ENCODE measurements at regions of chr16 and their contacts with region 1.

Region 1: DNA sequence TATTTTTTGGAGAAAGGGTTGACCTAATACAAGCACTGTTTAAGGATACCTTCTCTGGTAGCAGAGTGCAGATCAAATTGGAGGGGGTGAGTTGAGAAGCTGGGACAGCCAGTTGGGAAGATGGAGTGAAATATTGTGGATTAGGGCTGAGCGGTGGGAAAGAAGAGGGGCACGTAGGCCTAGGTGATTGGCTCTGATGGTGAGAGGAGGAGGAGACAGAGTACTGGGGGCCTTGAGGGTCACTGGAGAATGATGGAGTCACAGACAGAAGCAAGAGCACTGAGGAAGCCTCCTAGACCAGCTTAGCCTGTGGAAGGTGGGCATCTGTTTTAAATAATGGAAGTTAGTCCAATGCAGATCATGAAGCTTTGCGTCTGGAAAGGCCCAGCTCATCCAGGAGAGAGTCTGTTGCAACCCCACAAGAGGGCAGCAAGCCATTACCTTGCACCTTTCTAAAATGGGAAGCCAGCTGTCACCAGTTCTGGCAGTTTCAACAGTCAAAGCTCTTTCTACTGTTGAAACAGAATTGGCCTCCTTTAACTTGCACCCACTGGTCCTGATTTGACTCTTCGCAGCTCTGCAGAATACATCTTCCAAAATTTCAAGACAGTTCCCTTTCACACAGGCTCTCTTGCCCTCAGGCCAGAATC is 11.8 kb downstream of the SLC9A5 start:
- DNase-seq: no peak
- ATAC-seq: peak; percentile 79
- H3K4me3 ChIP-seq: no peak overlapping the region
- H3K27ac ChIP-seq: no peak overlapping the region
- H3K4me1 ChIP-seq: no peaks in the 10 kb centered on the region
- H3K27me3 ChIP-seq: no peaks in the 10 kb centered on the region
- CTCF ChIP-seq: peak; percentile 62 to 84 (median 70)
- POLR2A ChIP-seq: no peak
- RAD21 ChIP-seq: peak; percentile 92

Region 2: DNA sequence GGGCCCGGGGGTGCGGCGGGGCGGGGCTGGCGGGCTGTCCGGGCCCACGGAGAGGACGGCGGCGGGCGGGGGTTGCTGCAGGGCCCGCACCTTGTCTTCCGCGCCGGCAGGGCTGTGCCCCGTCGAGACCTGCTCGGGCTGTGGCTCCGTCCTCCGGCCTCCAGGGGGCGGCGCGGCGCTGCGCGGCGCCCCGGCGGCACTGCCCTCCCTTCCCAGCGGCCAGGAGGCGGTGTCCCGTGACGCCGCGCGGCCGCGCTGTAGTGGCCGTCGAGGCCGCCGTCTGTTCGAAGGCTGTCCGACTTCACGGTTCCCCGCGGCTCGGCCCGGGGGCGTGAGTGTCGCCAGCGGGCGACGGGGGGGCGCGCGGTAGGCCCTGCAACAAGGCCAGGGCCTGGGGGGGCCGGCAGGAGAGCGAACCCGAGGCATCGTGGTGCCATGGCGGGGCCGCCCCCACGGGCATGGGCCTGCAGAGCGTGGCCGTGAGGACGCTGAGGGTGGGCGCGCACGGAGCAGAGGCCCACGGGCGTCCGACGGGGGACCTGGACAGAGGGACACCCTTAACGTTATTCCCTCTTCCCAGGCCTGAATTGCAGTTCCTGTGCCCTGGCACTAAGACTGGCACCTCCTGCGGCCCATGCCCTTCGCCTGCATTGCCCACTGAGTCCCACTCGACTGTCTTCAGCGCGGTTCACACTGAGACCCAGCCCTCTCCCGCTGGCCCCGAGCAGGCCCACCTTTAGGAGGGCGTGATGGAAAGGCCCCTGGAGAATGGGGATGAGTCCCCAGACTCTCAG is 18.9 kb after region 1 on chr16 and contains the start of gene PLEKHG4:
- CTCF ChIA-PET with region 1: interaction called, 22 read pairs
- POLR2A ChIA-PET with region 1: no interaction called
- RAD21 ChIA-PET with region 1: interaction called in 1 of 2 experiments, 4 read pairs
- intact Hi-C with region 1: no loop called
- DNase-seq: peak; percentile 52
- ATAC-seq: peak; percentile 84
- H3K4me3 ChIP-seq: peak within 1 kb of the TSS; percentile 86 to 87
- H3K27ac ChIP-seq: peak within 1 kb of the TSS; percentile 91
- H3K4me1 ChIP-seq: peaks cover 28 to 39% of the 10 kb centered on the region in 2 experiments
- H3K27me3 ChIP-seq: no peaks in the 10 kb centered on the region
- CTCF ChIP-seq: peak in 2 of 3 experiments; percentile 62 to 79; a peak in 4 of 6 replicates
- POLR2A ChIP-seq: peak; percentile 33
- RAD21 ChIP-seq: no peak
- total RNA-seq, gene PLEKHG4: 38.5 TPM

Region 3: GRCh38 chr16:67296422-67296821 is 35.9 kb after region 1 on chr16:
- CTCF ChIA-PET with region 1: no interaction called
- POLR2A ChIA-PET with region 1: no interaction called
- RAD21 ChIA-PET with region 1: no interaction called
- intact Hi-C with region 1: no loop called
- DNase-seq: no peak
- ATAC-seq: peak; percentile 60; the same call in 1 of the 2 replicates
- H3K4me3 ChIP-seq: no peak overlapping the region
- H3K27ac ChIP-seq: no peak overlapping the region
- H3K4me1 ChIP-seq: peaks cover 7 to 8% of the 10 kb centered on the region in 2 experiments
- H3K27me3 ChIP-seq: no peaks in the 10 kb centered on the region
- CTCF ChIP-seq: no peak
- POLR2A ChIP-seq: no peak
- RAD21 ChIP-seq: no peak

Region 4: DNA sequence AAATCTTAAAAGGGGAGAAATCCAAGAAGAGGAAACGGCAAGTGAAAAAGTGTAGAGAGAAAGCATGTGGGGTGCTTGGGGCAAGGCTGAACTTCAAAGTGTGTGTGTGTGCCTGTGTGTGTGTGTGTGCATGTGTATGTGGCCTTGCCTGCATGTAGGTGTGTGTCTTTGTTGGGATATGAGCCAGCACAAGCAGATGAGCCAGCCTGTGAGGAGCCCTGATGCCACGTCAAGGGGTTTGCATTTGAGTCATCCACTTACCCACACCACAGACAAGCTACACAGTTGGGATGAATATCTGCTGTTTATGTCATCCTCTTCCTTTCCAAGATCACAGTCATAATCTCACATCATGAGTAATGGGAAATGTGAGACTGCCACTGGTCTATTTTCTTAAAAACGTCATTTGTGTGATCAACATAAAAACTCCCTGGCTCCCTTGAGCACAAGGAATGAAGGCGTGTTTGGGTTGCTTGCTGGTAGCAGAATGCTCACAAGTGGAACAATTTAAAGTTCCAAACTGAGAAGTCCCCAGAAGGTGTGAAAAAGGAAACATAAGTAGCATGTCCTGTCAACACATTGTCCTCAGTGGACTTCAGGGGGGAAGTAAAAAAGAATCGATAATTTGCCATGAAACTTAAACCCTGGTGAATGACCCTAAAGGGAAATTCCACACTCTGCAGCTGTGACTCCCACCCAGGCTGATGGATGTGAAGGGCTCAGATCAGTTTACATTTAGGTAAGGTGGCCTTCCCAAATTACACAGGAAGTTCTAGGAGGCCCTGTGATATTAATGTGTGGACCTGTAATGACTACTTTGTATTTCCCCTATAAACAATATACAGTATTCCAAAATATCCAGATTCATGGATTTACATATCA is 51.3 kb after region 1 on chr16:
- CTCF ChIA-PET with region 1: no interaction called
- POLR2A ChIA-PET with region 1: no interaction called
- RAD21 ChIA-PET with region 1: no interaction called
- intact Hi-C with region 1: no loop called
- DNase-seq: peak; percentile 70
- ATAC-seq: peak; percentile 82
- H3K4me3 ChIP-seq: no peak overlapping the region
- H3K27ac ChIP-seq: no peak overlapping the region
- H3K4me1 ChIP-seq: peaks cover 2 to 14% of the 10 kb centered on the region in 2 experiments; a peak in 3 of 4 replicates
- H3K27me3 ChIP-seq: no peaks in the 10 kb centered on the region
- CTCF ChIP-seq: no peak
- POLR2A ChIP-seq: no peak
- RAD21 ChIP-seq: no peak

Region 5: GRCh38 chr16:67339453-67339852 is 78.9 kb after region 1 on chr16:
- CTCF ChIA-PET with region 1: interaction called, 19 read pairs
- POLR2A ChIA-PET with region 1: interaction called, 3 read pairs
- RAD21 ChIA-PET with region 1: interaction called, 4 to 6 read pairs
- intact Hi-C with region 1: loop called (anchors 2 kb)
- DNase-seq: peak; percentile 18
- ATAC-seq: peak; percentile 55; the same call in 1 of the 2 replicates
- H3K4me3 ChIP-seq: no peak overlapping the region
- H3K27ac ChIP-seq: no peak overlapping the region
- H3K4me1 ChIP-seq: no peaks in the 10 kb centered on the region
- H3K27me3 ChIP-seq: no peaks in the 10 kb centered on the region
- CTCF ChIP-seq: peak in 2 of 3 experiments; percentile 34 to 76; a peak in 5 of 6 replicates
- POLR2A ChIP-seq: no peak
- RAD21 ChIP-seq: peak; percentile 83

Region 6: DNA sequence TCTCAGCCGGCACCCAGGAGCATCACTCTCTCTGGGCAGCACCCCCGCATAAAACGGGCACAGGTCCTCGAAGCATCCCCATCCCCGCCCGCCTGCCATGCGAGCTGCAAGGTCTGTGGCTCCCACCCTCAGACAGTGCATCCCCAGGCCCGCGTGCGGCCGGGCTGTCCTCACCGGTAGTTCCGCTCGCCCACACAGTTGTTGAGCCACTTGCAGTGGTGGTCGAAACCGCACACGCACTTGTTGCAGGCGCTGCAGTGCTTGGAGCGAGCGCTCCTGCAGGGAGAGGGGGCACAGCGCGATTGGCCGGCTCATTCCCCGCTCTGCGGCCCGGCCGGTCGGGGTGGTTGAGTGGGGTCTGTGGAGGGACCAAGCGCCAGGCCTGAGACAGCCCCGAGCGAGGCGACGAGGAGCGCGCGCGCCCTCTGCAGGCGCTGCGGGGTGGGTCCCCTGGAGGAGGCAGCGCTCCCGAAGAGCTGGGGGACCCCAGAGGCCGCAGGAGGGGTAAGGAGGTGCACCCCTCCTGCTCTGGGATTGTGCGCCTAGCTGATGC is 138.7 kb after region 1 on chr16:
- CTCF ChIA-PET with region 1: interaction called, 4 read pairs
- POLR2A ChIA-PET with region 1: no interaction called
- RAD21 ChIA-PET with region 1: interaction called in 1 of 2 experiments, 5 read pairs
- intact Hi-C with region 1: loop called (anchors 5 kb)
- DNase-seq: no peak
- ATAC-seq: peak; percentile 72
- H3K4me3 ChIP-seq: no peak overlapping the region
- H3K27ac ChIP-seq: no peak overlapping the region
- H3K4me1 ChIP-seq: peaks cover 16 to 28% of the 10 kb centered on the region in 2 experiments
- H3K27me3 ChIP-seq: no peaks in the 10 kb centered on the region
- CTCF ChIP-seq: peak; percentile 58 to 72 (median 65); a peak in 5 of 6 replicates
- POLR2A ChIP-seq: no peak
- RAD21 ChIP-seq: peak; percentile 71

Region 7: GRCh38 chr16:67428146-67428731 is 167.7 kb after region 1 on chr16:
- CTCF ChIA-PET with region 1: interaction called, 11 read pairs
- POLR2A ChIA-PET with region 1: no interaction called
- RAD21 ChIA-PET with region 1: interaction called, 3 read pairs
- intact Hi-C with region 1: no loop called
- DNase-seq: peak; percentile 42
- ATAC-seq: peak; percentile 59
- H3K4me3 ChIP-seq: no peak overlapping the region
- H3K27ac ChIP-seq: no peak overlapping the region; the same call in 1 of the 2 replicates
- H3K4me1 ChIP-seq: peaks cover 6 to 44% of the 10 kb centered on the region in 2 experiments; a peak in 3 of 4 replicates
- H3K27me3 ChIP-seq: no peaks in the 10 kb centered on the region
- CTCF ChIP-seq: peak; percentile 83 to 97 (median 84)
- POLR2A ChIP-seq: no peak
- RAD21 ChIP-seq: peak; percentile 86

Region 8: DNA sequence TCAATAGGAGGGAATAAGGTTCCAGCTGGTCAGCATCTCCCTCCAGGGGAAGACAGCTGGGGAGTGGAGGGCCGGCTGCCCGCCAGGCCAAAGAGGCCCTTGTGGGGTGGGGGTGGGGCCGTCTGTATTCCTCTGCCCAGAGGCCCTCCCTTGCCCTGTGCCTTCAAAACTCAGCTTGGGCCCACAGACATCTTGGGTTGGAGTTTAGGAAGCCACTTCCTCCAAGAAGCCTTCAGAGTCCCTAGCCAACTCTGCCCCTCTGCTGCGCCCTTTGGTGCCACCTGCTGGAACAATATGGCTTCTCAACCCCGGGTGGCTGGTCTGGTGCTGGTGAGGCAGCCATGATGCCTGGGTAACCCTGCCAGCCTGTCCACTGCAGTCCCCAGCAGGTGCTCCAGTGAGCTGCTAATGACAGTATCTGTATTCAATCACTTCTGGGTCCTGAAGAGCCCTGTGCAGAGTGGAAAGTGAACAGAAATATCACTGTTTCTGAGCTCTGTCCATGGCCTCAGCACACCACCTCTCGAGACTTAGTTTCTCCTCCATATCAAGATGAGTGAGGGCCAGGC is 187.0 kb after region 1 on chr16:
- CTCF ChIA-PET with region 1: interaction called, 15 read pairs
- POLR2A ChIA-PET with region 1: no interaction called
- RAD21 ChIA-PET with region 1: interaction called, 3 to 4 read pairs
- intact Hi-C with region 1: loop called (anchors 1 kb)
- DNase-seq: peak; percentile 54
- ATAC-seq: peak; percentile 99
- H3K4me3 ChIP-seq: no peak overlapping the region
- H3K27ac ChIP-seq: no peak overlapping the region
- H3K4me1 ChIP-seq: peaks cover 0 to 3% of the 10 kb centered on the region in 2 experiments; a peak in 1 of 4 replicates
- H3K27me3 ChIP-seq: no peaks in the 10 kb centered on the region
- CTCF ChIP-seq: peak; percentile 85 to 93 (median 91)
- POLR2A ChIP-seq: no peak
- RAD21 ChIP-seq: peak; percentile 94

Region 9: DNA sequence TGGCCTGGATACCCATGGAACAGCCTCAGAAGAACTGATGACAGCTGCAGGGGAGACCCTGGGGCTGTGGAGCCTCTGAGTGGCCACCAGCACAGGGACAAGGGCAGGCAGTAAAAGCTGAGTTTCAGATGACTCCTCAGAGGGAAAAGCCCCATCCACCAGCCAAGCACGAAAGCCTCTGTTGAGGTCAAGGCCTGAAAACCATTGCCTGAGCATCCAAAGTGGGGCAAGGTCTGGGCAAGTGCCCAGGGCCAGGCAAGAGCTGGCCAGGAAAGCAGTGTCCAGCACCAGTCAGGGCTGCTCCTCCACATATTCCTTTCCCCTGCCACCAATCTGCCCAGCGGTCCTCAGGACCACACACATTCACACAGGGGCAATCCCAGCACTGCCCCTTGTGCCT is 204.0 kb after region 1 on chr16:
- CTCF ChIA-PET with region 1: interaction called, 13 read pairs
- POLR2A ChIA-PET with region 1: no interaction called
- RAD21 ChIA-PET with region 1: no interaction called
- intact Hi-C with region 1: no loop called
- DNase-seq: no peak
- ATAC-seq: no peak
- H3K4me3 ChIP-seq: no peak overlapping the region
- H3K27ac ChIP-seq: no peak overlapping the region
- H3K4me1 ChIP-seq: peaks cover 6 to 19% of the 10 kb centered on the region in 2 experiments; a peak in 3 of 4 replicates
- H3K27me3 ChIP-seq: no peaks in the 10 kb centered on the region
- CTCF ChIP-seq: no peak
- POLR2A ChIP-seq: no peak
- RAD21 ChIP-seq: no peak

Measured in HCT116 (cell line).